Head of caudate nucleus (tissue), 42 donors: ENCODE measurements at regions of chr16 and their contacts with region 1.

Region 1: GRCh38 chr16:70653809-70654771 is 7.7 kb downstream of the IL34 start:
- DNase-seq: peak in 41 of 42 donors; percentile 62 to 92 (median 82)

Region 2: DNA sequence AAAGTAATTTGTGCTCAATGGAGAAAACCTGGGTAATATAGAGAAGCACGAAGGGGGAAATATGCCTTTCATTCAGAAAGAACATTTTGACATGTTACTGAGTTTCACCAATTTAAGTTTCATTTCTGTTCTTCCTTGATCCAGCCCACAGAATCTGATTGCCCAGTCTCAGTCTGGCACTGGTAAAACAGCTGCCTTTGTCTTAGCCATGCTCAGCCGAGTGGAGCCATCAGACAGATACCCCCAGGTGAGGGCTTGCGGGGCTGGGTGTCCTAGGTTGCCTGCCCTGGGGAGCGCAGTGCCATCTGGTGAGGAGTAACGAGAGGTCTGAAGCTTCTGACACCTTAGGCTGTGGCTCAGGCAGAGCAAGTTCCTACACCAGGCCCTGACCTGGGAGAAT is 289.7 kb before region 1 on chr16:
- intact Hi-C with region 1: loop called (anchors 5 kb)
- DNase-seq: no peak

Region 3: GRCh38 chr16:70395345-70395901 is 258.7 kb before region 1 on chr16:
- intact Hi-C with region 1: loop called (anchors 10 kb)
- DNase-seq: peak in 40 of 42 donors; percentile 18 to 81 (median 52)

Region 4: DNA sequence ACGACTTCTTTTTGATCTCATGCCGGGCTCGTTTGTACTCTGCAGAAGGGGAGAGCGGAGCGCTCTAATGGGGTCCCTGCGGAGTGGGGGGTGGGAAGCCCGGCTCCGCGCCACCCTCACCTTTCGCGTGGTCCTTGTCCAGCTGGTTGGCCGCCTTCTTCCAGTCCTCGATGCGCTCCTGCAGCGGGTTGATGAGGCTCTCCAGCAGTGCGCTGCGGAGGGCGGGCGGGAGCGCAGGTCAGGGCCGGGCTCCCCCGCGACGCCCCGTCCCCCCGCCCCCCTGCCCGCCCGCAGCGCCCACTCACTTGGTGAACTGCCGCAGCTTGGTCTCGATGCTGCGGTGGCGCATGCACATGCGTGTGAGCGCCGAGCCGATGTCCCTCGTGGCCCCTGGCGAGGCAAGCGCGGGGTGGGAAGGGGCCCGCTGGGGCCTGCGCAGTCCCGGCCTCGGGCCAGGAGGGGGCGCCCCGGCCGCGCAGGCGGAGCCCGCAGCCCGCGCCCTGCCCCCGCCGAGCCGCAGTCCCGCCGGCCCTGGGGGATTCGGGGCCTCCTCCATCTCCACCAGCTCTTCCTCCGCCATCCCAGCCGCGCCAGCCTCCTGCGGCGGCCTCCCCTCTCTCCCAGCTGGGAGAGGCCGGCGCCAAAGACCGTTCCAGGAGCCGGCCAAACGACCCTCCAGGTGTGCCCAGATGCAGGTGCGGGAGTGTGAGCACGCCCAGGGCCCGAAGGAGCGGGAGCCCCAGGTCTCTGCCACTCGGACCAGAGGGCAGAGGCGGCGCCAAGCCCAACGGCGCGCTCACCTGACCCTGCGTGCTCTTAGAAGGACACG is 25.8 kb after region 1 on chr16:
- intact Hi-C with region 1: no loop called
- DNase-seq: peak in 11 of 42 donors; percentile 7 to 69 (median 49)